Activated CD4-positive, alpha-beta T cell treated with anti-CD3 and anti-CD28 coated beads, Interleukin-2, amount 10 ng/mL, durations not matched to agents 7 days and 5 days (primary cell): ENCODE measurements at regions of chr11 and their contacts with region 1.

Region 1: DNA sequence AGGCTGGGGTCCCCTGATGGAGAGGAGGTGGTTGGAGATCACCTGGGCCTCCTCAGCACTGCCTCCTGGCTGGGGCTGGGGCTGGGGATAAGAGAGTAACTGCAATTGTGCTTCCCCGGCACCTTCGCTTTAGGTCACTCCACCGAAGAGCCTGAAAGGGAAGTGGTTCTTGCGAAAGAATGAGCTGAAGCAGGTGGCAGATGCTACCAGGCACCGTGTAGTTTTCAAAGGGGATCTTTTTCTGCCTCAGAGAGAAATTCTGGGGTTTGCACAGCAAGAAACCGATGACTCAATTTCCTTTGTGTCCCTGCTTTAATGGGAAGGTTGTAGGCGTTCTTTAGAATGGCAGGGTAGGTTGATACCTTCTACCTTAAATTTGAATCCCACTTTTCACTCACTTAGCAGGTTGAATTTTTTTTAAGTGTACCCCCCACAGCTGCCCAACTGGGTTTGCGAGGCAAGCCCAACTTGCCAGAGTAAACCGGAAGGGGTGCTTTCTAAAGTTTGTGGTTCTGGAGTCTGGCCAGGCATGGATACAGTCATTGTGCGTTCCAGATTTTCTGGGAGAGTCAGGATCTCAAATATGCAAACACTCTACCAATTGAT is 5.3 kb downstream of the CD44 start:
- DNase-seq: peak; percentile 77
- H3K4me3 Mint-ChIP-seq: peak overlapping the region; percentile 50
- H3K27ac Mint-ChIP-seq: peak overlapping the region; percentile 86
- H3K4me1 Mint-ChIP-seq: peaks cover 76% of the 10 kb centered on the region
- H3K27me3 Mint-ChIP-seq: no peaks in the 10 kb centered on the region

Region 2: DNA sequence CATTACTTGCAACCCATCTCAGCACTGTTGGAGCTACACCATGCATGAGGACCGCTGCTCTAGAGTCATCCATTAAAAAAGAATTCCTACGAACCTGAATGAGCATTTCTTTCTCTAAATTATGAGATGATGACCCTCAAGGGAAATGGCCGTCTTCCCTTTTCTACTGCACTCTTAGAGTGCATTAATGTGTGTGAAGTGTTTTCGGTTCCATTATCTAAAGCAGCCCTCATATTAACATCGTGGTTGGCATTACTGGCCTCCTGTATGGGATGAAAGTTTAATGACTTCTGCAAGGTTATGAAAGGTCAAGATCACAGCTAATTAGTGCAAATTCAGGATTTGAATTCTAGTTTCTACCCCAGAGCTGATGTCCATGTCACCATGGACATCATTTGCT is 11.4 kb after region 1 on chr11:
- CTCF ChIA-PET with region 1: interaction called, 95 read pairs
- POLR2A ChIA-PET with region 1: interaction called, 3 read pairs
- DNase-seq: no peak
- H3K4me3 Mint-ChIP-seq: no peak overlapping the region
- H3K27ac Mint-ChIP-seq: no peak overlapping the region
- H3K4me1 Mint-ChIP-seq: peaks cover 96% of the 10 kb centered on the region
- H3K27me3 Mint-ChIP-seq: no peaks in the 10 kb centered on the region